MCF 10A (cell line): ENCODE measurements at regions of chr20 and their contacts with region 1.

Region 1: GRCh38 chr20:45771182-45771759 is 20.4 kb downstream of the WFDC3 start:
- DNase-seq: peak; percentile 83
- H3K4me3 Mint-ChIP-seq: no peak overlapping the region
- H3K27ac Mint-ChIP-seq: no peak overlapping the region
- H3K4me1 Mint-ChIP-seq: no peaks in the 10 kb centered on the region
- H3K27me3 Mint-ChIP-seq: peaks cover 11% of the 10 kb centered on the region
- CTCF ChIP-seq: peak; percentile 83

Region 2: GRCh38 chr20:45362804-45363610 is 408.3 kb before region 1 on chr20 and contains the start of gene SYS1:
- CTCF ChIA-PET with region 1: interaction called, 123 read pairs
- POLR2A ChIA-PET with region 1: interaction called, 8 read pairs
- intact Hi-C with region 1: no loop called
- DNase-seq: peak; percentile 99
- H3K4me3 Mint-ChIP-seq: peak within 1 kb of the TSS; percentile 97
- H3K27ac Mint-ChIP-seq: peak within 1 kb of the TSS; percentile 95
- H3K4me1 Mint-ChIP-seq: peaks cover 30% of the 10 kb centered on the region
- H3K27me3 Mint-ChIP-seq: no peaks in the 10 kb centered on the region
- CTCF ChIP-seq: peak; percentile 67
- total RNA-seq, gene SYS1: 19.1 and 28.2 TPM in 2 replicates

Region 3: GRCh38 chr20:45436732-45437391 is 334.4 kb before region 1 on chr20:
- CTCF ChIA-PET with region 1: interaction called, 50 read pairs
- POLR2A ChIA-PET with region 1: interaction called, 5 read pairs
- intact Hi-C with region 1: no loop called
- DNase-seq: peak; percentile 82
- H3K4me3 Mint-ChIP-seq: peak overlapping the region; percentile 74
- H3K27ac Mint-ChIP-seq: peak overlapping the region; percentile 57
- H3K4me1 Mint-ChIP-seq: no peaks in the 10 kb centered on the region
- H3K27me3 Mint-ChIP-seq: no peaks in the 10 kb centered on the region
- CTCF ChIP-seq: peak; percentile 95

Region 4: GRCh38 chr20:45523821-45524220 is 247.4 kb before region 1 on chr20:
- CTCF ChIA-PET with region 1: interaction called, 11 read pairs
- POLR2A ChIA-PET with region 1: interaction called, 5 read pairs
- intact Hi-C with region 1: no loop called
- DNase-seq: no peak
- H3K4me3 Mint-ChIP-seq: no peak overlapping the region
- H3K27ac Mint-ChIP-seq: no peak overlapping the region
- H3K4me1 Mint-ChIP-seq: peaks cover 10% of the 10 kb centered on the region
- H3K27me3 Mint-ChIP-seq: peaks cover 9% of the 10 kb centered on the region
- CTCF ChIP-seq: no peak

Region 5: GRCh38 chr20:45592574-45593189 is 178.6 kb before region 1 on chr20:
- CTCF ChIA-PET with region 1: interaction called, 54 read pairs
- POLR2A ChIA-PET with region 1: interaction called, 3 read pairs
- intact Hi-C with region 1: loop called (anchors 1 kb)
- DNase-seq: peak; percentile 67
- H3K4me3 Mint-ChIP-seq: no peak overlapping the region
- H3K27ac Mint-ChIP-seq: no peak overlapping the region
- H3K4me1 Mint-ChIP-seq: peaks cover 9% of the 10 kb centered on the region
- H3K27me3 Mint-ChIP-seq: peaks cover 27% of the 10 kb centered on the region
- CTCF ChIP-seq: peak; percentile 68

Region 6: GRCh38 chr20:45798935-45799642 is 27.8 kb after region 1 on chr20:
- CTCF ChIA-PET with region 1: interaction called, 10 read pairs
- POLR2A ChIA-PET with region 1: interaction called, 5 read pairs
- intact Hi-C with region 1: no loop called
- DNase-seq: peak; percentile 71
- H3K4me3 Mint-ChIP-seq: no peak overlapping the region
- H3K27ac Mint-ChIP-seq: peak overlapping the region; percentile 40
- H3K4me1 Mint-ChIP-seq: peaks cover 6% of the 10 kb centered on the region
- H3K27me3 Mint-ChIP-seq: no peaks in the 10 kb centered on the region
- CTCF ChIP-seq: peak; percentile 74

Region 7: DNA sequence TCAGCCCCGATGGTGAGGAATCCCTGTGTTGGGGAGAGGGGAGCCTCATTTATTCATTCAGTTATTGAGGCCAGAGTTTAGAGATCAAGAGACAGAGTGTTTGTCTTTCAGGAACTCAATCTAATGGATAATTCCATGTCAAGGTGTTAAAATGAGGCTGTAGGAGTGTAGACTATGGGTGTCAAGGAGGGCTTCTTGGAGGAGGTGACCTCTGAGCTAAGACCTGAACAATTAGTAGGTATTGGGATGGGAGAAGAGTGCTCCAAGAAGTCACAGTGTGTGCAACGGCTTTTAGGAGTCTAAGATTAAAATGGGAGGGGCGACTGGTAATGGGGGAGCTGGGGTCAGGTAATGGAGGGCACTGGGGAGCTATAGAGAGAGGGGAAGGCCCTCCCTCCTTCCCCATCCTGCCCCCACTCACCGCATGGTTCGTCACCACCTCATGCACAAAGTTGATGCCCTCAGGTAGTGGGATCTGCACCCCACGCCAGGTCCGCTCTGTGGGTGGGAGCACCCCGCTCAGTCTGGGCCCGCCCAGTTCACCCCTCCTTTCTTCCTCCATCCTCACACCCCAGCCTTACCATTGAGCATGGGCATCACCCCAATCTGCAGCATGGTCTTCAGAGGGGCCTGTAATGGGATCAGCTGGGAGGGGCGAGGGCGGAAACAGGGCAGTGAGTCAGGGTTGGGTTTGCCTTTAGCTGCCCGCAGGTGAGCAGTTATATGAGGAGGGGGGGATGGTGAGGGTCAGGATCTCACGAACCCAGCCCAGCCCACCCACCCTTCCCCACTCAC is 128.0 kb after region 1 on chr20:
- CTCF ChIA-PET with region 1: no interaction called
- POLR2A ChIA-PET with region 1: no interaction called
- intact Hi-C with region 1: no loop called
- DNase-seq: no peak
- H3K4me3 Mint-ChIP-seq: no peak overlapping the region
- H3K27ac Mint-ChIP-seq: no peak overlapping the region
- H3K4me1 Mint-ChIP-seq: no peaks in the 10 kb centered on the region
- H3K27me3 Mint-ChIP-seq: no peaks in the 10 kb centered on the region
- CTCF ChIP-seq: no peak